Activated T-helper 1 cell treated with anti-CD3 and anti-CD28 coated beads, Interleukin-12 subunit alpha, Interleukin-12 subunit beta, Interleukin-2, Interleukin-4 antibody, amounts not matched to agents 30 ng/mL and 10 ng/mL and 1 ng/mL, durations not matched to agents 14 hours and 24 hours and 36 hours (primary cell): ENCODE measurements at regions of chr7 and their contacts with region 1.

Region 1: DNA sequence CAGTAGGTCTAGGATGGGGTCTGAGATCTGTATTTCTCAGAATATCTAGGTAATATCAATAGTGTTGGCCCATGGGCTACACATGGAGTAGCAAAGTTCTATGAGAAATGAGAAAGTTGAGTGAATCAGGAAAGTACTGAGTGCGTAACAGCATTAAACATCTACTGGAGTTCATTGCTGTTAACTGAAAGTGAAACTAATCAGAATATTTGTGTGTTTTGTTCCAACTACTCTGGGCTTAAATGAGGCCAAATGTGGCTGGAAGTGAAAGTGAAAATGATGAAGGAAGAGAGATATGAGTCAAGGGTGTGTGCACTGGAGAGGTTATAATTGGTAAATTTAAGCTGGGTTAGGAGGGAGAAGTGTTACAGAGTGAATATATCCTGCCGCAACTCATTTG is 46.5 kb downstream of the TMEM106B start:
- DNase-seq: peak; percentile 60
- H3K4me3 Mint-ChIP-seq: no peak overlapping the region
- H3K27ac Mint-ChIP-seq: no peak overlapping the region
- H3K4me1 Mint-ChIP-seq: peaks cover 7% of the 10 kb centered on the region
- H3K27me3 Mint-ChIP-seq: peaks cover 18% of the 10 kb centered on the region

Region 2: GRCh38 chr7:12281038-12281437 is 23.5 kb after region 1 on chr7:
- intact Hi-C with region 1: loop called (anchors 2 kb)
- DNase-seq: no peak
- H3K4me3 Mint-ChIP-seq: no peak overlapping the region
- H3K27ac Mint-ChIP-seq: no peak overlapping the region
- H3K4me1 Mint-ChIP-seq: no peaks in the 10 kb centered on the region
- H3K27me3 Mint-ChIP-seq: peaks cover 13% of the 10 kb centered on the region

Region 3: DNA sequence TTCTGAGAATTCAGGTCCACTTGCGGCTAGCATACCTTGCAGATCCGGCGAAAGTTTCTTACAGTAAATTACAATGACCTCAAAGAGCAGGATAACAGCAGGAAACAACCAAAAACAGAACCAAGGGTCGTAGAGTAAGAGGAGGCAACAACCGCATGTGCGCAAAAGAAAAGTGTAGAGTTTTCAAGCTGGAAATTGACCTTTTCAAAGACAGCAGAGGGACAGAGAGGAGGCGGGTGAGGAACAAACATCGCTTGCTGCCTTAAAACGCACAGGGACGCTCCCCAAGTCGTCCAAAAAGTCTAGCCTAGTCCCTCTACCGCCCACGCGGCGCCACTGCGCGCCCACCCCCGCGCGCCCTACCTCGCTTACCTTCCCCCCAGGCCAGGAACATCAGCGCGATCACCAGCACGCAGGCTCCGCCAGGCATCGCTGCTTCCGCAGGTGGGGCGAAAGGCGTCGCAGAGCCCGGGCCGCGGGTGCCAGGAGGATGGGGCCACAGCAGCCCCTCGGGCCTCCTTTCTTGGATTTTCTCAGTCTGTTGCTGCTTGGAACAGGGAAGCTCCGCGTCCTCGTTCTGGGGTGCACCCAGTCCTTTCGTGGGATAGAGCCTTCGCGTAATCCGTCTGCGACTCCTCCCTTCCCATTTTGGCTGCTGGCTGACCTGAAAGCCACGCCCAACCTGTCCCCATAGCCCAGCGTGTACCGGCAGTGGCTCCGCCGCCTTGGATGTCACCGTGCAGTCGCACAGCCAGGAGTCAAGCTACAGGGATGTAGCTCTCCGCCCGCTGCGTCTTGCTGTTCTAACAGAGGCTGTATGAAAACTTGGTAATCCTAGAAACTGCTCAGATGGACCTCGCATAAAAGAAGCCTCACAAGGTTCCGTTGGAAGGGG is 146.0 kb after region 1 on chr7 and contains the start of gene VWDE:
- intact Hi-C with region 1: loop called (anchors 2 kb)
- DNase-seq: peak; percentile 55
- H3K4me3 Mint-ChIP-seq: peak within 1 kb of the TSS; percentile 88
- H3K27ac Mint-ChIP-seq: peak within 1 kb of the TSS; percentile 69
- H3K4me1 Mint-ChIP-seq: peaks cover 27% of the 10 kb centered on the region
- H3K27me3 Mint-ChIP-seq: peaks cover 25% of the 10 kb centered on the region
- total RNA-seq, gene VWDE: 1.6 and 1.7 TPM in 2 replicates